ENCODE measurements at regions of chr3 and their contacts with region 1.

Region 1: DNA sequence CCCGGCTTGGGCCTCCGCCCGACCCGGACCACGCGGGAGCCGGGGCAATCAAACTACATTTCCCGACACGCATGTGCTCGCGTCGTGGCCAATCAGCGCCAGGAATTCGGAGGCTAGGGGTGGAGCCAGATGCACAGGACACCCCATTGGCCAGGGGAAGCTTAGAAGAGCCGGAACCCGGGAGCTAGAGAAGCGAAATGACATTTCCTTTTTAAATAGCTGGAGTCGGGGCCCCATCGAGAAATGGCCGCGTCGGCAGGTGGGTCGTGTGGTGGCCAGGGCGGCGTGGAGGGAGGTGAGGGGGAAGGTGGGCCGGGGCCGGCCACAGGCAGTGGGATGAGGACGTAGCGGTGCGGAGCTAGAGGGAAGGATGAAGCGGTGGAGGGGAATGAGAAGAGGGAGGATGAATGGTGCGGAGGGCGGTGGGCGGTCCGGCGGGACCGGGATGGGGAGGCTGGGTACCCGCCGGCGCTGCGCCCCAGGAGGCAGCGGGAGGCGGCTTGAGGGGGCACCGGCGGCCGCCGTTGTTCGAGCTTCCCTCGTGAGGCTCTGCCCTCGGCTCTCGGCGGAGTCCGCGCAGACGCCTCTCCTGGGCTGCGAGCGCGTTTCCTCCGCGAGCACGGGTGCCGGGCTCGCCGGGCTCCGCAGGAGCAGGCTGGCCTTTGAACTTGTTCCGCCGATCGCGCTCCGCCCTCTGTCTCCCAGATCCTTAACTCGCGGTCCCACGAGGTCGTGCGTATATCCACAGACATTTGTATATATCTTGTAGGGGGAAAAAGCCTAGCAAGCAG is at the start of gene KBTBD8:
- DNase-seq: peak; percentile 99
- ATAC-seq: peak; percentile 35
- total RNA-seq, gene KBTBD8: 4.1 TPM

Region 2: GRCh38 chr3:67017211-67017610 is 18.9 kb after region 1 on chr3:
- intact Hi-C with region 1: loop called (anchors 2 kb)
- DNase-seq: no peak
- ATAC-seq: no peak

Region 3: DNA sequence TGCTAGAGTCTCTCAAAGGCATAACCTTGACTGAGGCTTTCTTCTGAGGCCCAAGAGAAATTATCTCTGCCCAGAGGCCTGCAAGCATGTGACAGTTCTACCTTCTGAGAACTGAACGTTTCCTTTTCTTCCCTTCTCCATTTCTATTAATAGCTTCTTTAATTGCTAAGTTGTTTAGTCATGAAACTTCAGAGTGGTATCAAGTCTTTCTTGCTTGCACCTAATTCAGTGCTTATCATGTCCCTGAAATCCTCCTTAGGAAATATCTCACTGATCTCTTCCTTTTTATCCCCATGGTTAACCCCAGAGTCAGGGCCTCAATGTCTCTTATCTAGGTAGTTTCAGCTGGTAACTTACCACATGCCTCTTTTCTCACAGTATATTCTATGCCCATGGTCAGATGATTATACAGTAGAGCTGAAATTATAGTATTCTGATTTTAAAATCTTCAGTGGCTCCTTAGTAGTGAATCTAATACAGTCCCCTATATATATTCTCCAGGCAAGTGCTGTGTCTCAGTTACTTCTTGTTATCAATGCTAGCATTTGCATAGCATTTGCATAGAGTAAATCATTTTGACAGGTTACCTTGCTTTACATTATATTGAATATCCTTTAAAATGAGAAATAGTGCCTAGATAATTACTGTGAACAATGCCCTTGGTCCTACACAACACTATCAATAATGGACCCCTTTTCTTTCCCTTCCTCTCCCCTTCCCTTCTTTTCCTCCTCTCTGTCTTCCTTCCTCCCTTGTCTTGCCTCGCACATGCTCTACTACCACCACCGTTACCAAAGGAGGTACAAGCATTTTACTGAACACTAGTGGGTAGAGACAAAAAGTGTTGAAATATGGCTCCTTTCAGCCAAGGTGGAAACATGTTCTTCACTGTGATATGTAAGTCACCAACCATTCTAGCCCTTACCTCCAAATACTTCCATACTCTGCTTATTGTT is 32.8 kb after region 1 on chr3:
- intact Hi-C with region 1: loop called (anchors 5 kb)
- DNase-seq: no peak
- ATAC-seq: no peak

Measured in Right ventricle myocardium inferior (tissue), 1 donor.